ENCODE measurements at regions of chr1 and their contacts with region 1.

Region 1: DNA sequence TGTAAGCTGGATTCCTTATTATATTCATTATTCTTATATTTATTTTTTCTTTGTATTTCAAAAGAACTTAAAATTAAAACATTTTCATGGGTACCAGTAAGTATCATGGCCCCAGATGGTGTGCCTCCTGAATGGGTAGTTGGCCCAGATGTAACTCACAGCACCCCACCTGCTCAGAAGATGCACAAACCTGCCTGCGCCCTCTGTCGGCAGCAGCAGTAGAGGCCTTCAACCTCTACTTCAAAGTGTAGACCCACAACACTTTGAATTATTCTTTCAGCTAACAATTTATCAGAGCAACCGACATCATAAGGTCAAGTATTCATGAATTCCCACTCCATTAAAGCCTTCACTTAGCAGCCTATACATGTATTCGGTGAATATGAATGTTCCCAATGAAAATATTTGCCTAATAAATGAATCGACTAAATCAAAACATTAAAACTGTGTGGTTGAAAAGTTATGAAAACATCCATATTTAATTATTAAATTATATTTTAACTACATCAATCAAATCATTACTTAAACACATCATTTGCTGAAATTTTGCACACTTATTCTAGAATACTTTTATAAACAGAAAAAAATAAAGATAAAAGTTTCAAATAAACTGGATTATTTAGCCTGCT is 25.4 kb downstream of the PIGM start:
- DNase-seq: peak; percentile 50 to 81 (median 53)
- H3K4me3 ChIP-seq: no peak overlapping the region
- H3K4me3 Mint-ChIP-seq: no peak overlapping the region
- H3K27ac ChIP-seq: no peak overlapping the region
- H3K27ac Mint-ChIP-seq: no peak overlapping the region
- H3K4me1 ChIP-seq: no peaks in the 10 kb centered on the region
- H3K4me1 Mint-ChIP-seq: no peaks in the 10 kb centered on the region
- H3K27me3 ChIP-seq: no peaks in the 10 kb centered on the region
- H3K27me3 Mint-ChIP-seq: peaks cover 1 to 21% of the 10 kb centered on the region in 2 donors

Region 2: GRCh38 chr1:159936273-159936904 is 70.0 kb before region 1 on chr1:
- CTCF ChIA-PET with region 1: interaction called, 45 read pairs
- POLR2A ChIA-PET with region 1: no interaction called
- DNase-seq: peak; percentile 66 to 86 (median 77)
- H3K4me3 ChIP-seq: no peak overlapping the region
- H3K4me3 Mint-ChIP-seq: peak overlapping the region in 1 of 7 donors; percentile 54
- H3K27ac ChIP-seq: no peak overlapping the region
- H3K27ac Mint-ChIP-seq: peak overlapping the region in 2 of 8 donors; percentile 4 to 52
- H3K4me1 ChIP-seq: peaks cover 9% of the 10 kb centered on the region
- H3K4me1 Mint-ChIP-seq: peaks cover 5 to 8% (median 5%) of the 10 kb centered on the region in 3 donors
- H3K27me3 ChIP-seq: peaks cover 2% of the 10 kb centered on the region
- H3K27me3 Mint-ChIP-seq: peaks cover 9 to 21% of the 10 kb centered on the region in 2 donors

Region 3: GRCh38 chr1:159945483-159946241 is 60.8 kb before region 1 on chr1 and contains the start of gene IGSF9:
- CTCF ChIA-PET with region 1: interaction called, 21 read pairs
- POLR2A ChIA-PET with region 1: no interaction called
- DNase-seq: peak; percentile 63 to 90 (median 78)
- H3K4me3 ChIP-seq: peak within 1 kb of the TSS; percentile 39
- H3K4me3 Mint-ChIP-seq: peak within 1 kb of the TSS; percentile 29 to 85 (median 70)
- H3K27ac ChIP-seq: no peak within 1 kb of the TSS
- H3K27ac Mint-ChIP-seq: peak within 1 kb of the TSS in 2 of 8 donors; percentile 5 to 58
- H3K4me1 ChIP-seq: peaks cover 6% of the 10 kb centered on the region
- H3K4me1 Mint-ChIP-seq: peaks cover 8 to 10% (median 10%) of the 10 kb centered on the region in 3 donors
- H3K27me3 ChIP-seq: peaks cover 25% of the 10 kb centered on the region
- H3K27me3 Mint-ChIP-seq: peaks cover 18 to 34% of the 10 kb centered on the region in 2 donors
- total RNA-seq, gene IGSF9: 0.04 to 0.11 TPM

Region 4: DNA sequence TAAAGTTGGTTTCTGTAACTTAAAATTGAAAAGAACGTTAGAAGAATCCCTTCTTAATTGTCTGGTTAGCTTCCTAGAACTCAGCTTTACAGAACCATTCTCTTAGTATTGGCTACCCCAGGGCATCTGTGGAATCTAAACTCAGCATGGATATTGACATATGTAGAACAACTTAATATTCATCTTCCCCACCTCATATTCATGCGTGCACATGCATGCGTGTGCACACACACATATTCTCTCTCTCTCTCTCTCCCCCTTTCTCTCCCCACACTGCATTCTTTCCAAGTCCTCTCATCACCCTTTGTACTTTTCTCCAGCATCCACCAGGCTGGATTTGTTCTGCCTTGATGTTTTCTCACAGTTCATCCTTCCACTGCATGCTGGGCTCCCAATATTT is 11.9 kb after region 1 on chr1:
- CTCF ChIA-PET with region 1: interaction called, 17 read pairs
- POLR2A ChIA-PET with region 1: no interaction called
- DNase-seq: no peak
- H3K4me3 ChIP-seq: no peak overlapping the region
- H3K4me3 Mint-ChIP-seq: peak overlapping the region in 1 of 7 donors; percentile 40
- H3K27ac ChIP-seq: no peak overlapping the region
- H3K27ac Mint-ChIP-seq: no peak overlapping the region
- H3K4me1 ChIP-seq: no peaks in the 10 kb centered on the region
- H3K4me1 Mint-ChIP-seq: no peaks in the 10 kb centered on the region
- H3K27me3 ChIP-seq: no peaks in the 10 kb centered on the region
- H3K27me3 Mint-ChIP-seq: peaks cover 10 to 11% of the 10 kb centered on the region in 2 donors

Region 5: DNA sequence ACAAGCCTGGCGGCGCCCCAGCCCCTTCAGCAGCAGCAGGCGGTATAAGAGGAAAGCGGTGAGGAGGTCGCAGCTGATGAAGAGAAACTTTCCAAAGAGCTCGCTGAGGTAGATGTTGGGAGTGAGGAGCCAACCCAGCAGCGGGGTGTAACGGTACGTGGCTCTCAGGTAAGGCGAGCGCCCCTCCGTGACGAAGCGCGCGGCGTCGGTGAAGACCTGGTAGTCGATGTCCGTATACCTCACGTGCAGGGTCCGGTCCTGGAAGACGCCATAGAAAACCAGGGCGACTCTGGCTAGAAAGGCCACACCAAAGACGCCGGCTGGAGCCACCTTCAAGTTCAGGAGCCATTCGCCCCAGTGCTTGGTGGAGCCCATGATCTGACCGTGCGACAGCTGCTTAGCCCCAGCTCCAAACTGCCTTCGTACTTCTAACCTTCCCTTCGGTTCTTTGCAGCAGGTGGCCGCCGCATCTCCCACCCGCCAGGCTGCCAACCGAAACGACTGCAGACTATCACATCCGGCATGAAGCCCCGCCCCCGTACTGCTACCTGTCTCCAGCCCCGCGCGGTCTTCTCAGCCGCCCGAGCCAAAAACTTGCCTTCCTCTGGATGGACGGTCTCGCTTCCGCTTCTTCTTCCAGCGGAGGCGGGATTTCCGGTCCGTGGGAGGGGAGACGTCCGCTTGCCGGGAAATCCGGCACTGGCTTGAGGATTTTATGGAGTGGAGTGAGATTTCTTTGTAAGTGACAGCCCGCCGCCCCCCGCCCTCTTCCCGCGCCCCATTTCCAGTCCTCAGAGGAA is 25.1 kb after region 1 on chr1 and contains the start of gene PIGM:
- CTCF ChIA-PET with region 1: interaction called, 34 read pairs
- POLR2A ChIA-PET with region 1: no interaction called
- DNase-seq: peak; percentile 87 to 94 (median 91)
- H3K4me3 ChIP-seq: peak within 1 kb of the TSS; percentile 66
- H3K4me3 Mint-ChIP-seq: peak within 1 kb of the TSS; percentile 93 to 99 (median 96)
- H3K27ac ChIP-seq: peak within 1 kb of the TSS; percentile 58
- H3K27ac Mint-ChIP-seq: peak within 1 kb of the TSS; percentile 73 to 98 (median 95)
- H3K4me1 ChIP-seq: peaks cover 25% of the 10 kb centered on the region
- H3K4me1 Mint-ChIP-seq: peaks cover 37 to 58% (median 47%) of the 10 kb centered on the region in 3 donors
- H3K27me3 ChIP-seq: no peaks in the 10 kb centered on the region
- H3K27me3 Mint-ChIP-seq: no peaks in the 10 kb centered on the region
- total RNA-seq, gene PIGM: 6.5 to 6.9 TPM

Region 6: DNA sequence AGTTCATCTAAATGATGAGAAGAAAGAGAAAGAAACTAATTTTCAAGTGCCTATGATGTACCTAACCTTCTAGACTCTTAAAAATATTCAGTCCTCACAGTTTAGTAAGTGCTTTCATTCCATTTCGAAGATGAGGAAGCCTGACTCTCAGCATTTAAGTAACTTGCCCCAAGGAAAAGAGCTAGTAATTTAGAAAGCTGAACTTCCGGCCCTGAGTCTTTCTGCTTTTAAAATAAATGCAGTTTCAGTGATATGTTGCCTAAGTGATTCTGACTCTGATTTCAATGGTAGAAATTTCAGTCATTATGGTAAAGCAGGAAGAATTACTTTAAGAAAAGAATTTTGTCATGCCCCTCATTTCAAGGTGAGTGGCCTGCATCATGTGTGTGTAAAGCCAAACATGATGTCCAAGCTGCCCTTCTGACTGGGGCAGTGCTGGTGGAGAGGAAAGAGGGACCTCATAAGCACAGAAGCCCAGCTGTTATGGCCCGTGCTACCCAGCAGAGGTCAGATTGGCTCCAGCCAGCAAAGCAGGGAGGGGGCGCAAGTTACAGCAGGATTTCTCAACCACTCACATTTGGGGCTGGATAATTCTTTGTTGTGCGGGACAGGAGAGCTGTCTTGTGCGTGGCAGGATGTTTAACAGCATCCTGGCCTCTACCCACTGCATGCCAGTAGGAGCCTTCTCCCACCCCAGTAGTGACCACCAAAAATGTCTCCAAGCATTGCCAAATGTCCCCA is 155.7 kb after region 1 on chr1:
- CTCF ChIA-PET with region 1: no interaction called
- POLR2A ChIA-PET with region 1: no interaction called
- DNase-seq: no peak
- H3K4me3 ChIP-seq: no peak overlapping the region
- H3K4me3 Mint-ChIP-seq: no peak overlapping the region
- H3K27ac ChIP-seq: no peak overlapping the region
- H3K27ac Mint-ChIP-seq: no peak overlapping the region
- H3K4me1 ChIP-seq: no peaks in the 10 kb centered on the region
- H3K4me1 Mint-ChIP-seq: no peaks in the 10 kb centered on the region
- H3K27me3 ChIP-seq: peaks cover 7% of the 10 kb centered on the region
- H3K27me3 Mint-ChIP-seq: peaks cover 17 to 45% of the 10 kb centered on the region in 2 donors

Measured in CD8-positive, alpha-beta memory T cell (primary cell).